ENCODE measurements at regions of chr2 and their contacts with region 1.

Region 1: GRCh38 chr2:29580223-29580622 is 341.2 kb downstream of the ALK start:
- DNase-seq: no peak
- H3K4me3 Mint-ChIP-seq: no peak overlapping the region
- H3K27ac Mint-ChIP-seq: no peak overlapping the region
- H3K4me1 Mint-ChIP-seq: no peaks in the 10 kb centered on the region
- H3K27me3 Mint-ChIP-seq: peaks cover 11% of the 10 kb centered on the region
- CTCF ChIP-seq: no peak

Region 2: GRCh38 chr2:29528891-29529520 is 51.2 kb before region 1 on chr2:
- CTCF ChIA-PET with region 1: no interaction called
- POLR2A ChIA-PET with region 1: no interaction called
- intact Hi-C with region 1: loop called (anchors 1 kb)
- DNase-seq: peak; percentile 19
- H3K4me3 Mint-ChIP-seq: no peak overlapping the region
- H3K27ac Mint-ChIP-seq: no peak overlapping the region
- H3K4me1 Mint-ChIP-seq: peaks cover 8% of the 10 kb centered on the region
- H3K27me3 Mint-ChIP-seq: peaks cover 12% of the 10 kb centered on the region
- CTCF ChIP-seq: no peak

Measured in MCF 10A (cell line).